ENCODE measurements at regions of chr14 and their contacts with region 1.

Region 1: GRCh38 chr14:20413045-20413799 is at the start of gene TEP1:
- DNase-seq: peak; percentile 33 to 84 (median 74)
- ATAC-seq: peak; percentile 63
- H3K4me3 ChIP-seq: peak within 1 kb of the TSS; percentile 66 to 97
- H3K4me3 Mint-ChIP-seq: peak within 1 kb of the TSS; percentile 91
- H3K27ac ChIP-seq: peak within 1 kb of the TSS; percentile 80 to 85
- H3K27ac Mint-ChIP-seq: peak within 1 kb of the TSS; percentile 93
- H3K4me1 ChIP-seq: peaks cover 31% of the 10 kb centered on the region
- H3K4me1 Mint-ChIP-seq: peaks cover 48% of the 10 kb centered on the region
- H3K27me3 ChIP-seq: no peaks in the 10 kb centered on the region
- H3K27me3 Mint-ChIP-seq: no peaks in the 10 kb centered on the region
- CTCF ChIP-seq: no peak
- total RNA-seq, gene TEP1: 16.9 to 20.2 TPM

Region 2: GRCh38 chr14:20343092-20343861 is 69.9 kb before region 1 on chr14 and contains the start of gene PARP2:
- CTCF ChIA-PET with region 1: interaction called, 7 read pairs
- POLR2A ChIA-PET with region 1: interaction called, 10 read pairs
- intact Hi-C with region 1: loop called (anchors 1 to 5 kb)
- DNase-seq: peak; percentile 70 to 97 (median 84)
- ATAC-seq: peak; percentile 81
- H3K4me3 ChIP-seq: peak within 1 kb of the TSS; percentile 96 to 98
- H3K4me3 Mint-ChIP-seq: peak within 1 kb of the TSS; percentile 100
- H3K27ac ChIP-seq: peak within 1 kb of the TSS; percentile 79 to 93
- H3K27ac Mint-ChIP-seq: peak within 1 kb of the TSS; percentile 97
- H3K4me1 ChIP-seq: peaks cover 8% of the 10 kb centered on the region
- H3K4me1 Mint-ChIP-seq: peaks cover 18% of the 10 kb centered on the region
- H3K27me3 ChIP-seq: peaks cover 0 to 3% of the 10 kb centered on the region in 2 experiments
- H3K27me3 Mint-ChIP-seq: no peaks in the 10 kb centered on the region
- CTCF ChIP-seq: peak; percentile 14
- total RNA-seq, gene PARP2: 15.9 to 16.5 TPM

Region 3: GRCh38 chr14:20440882-20441281 is 27.7 kb after region 1 on chr14:
- CTCF ChIA-PET with region 1: interaction called, 10 read pairs
- POLR2A ChIA-PET with region 1: interaction called, 3 read pairs
- intact Hi-C with region 1: loop called in 1 of 2 experiments (anchors 2 kb)
- DNase-seq: peak in 8 of 9 experiments; percentile 10 to 65 (median 39)
- ATAC-seq: peak; percentile 99
- H3K4me3 ChIP-seq: peak overlapping the region in 1 of 2 experiments; percentile 54
- H3K4me3 Mint-ChIP-seq: peak overlapping the region; percentile 73
- H3K27ac ChIP-seq: peak overlapping the region; percentile 51 to 54
- H3K27ac Mint-ChIP-seq: peak overlapping the region; percentile 90
- H3K4me1 ChIP-seq: peaks cover 23% of the 10 kb centered on the region
- H3K4me1 Mint-ChIP-seq: peaks cover 25% of the 10 kb centered on the region
- H3K27me3 ChIP-seq: no peaks in the 10 kb centered on the region
- H3K27me3 Mint-ChIP-seq: no peaks in the 10 kb centered on the region
- CTCF ChIP-seq: no peak

Region 4: DNA sequence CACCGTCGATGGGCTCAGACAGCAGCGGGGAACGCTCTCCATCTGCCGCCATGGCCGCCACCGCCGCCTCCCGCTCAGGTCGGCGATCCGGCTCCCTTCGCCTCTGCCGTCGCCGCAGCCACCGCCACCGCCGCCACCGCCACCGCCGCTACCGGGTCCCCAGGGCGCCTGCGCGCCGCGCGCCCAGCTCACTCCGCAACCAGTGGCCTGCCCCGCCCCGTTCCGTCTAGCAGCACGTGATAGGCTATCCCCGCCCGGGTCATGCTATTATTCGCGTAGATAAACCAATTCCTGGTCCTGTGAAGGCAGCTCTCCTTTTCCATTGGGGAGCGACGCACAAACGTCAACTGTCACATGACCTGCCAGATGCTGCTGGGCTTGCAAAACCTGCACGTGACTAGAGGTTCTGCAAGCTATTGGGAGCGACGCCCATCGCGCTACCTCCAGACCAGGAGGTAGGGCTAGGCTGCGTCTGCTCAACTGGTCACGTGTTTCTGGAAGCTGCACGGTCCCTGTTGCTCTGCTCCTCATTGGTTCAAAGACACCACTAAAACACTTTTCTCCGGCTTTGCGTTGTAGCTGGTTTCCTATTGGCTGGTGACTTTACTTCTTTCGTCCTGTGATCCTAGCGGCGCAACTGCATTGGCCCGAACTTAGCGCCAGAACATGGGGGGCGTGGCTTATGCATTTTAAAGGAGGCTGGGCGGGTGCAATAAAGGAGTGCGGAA is 48.2 kb after region 1 on chr14 and contains the start of gene PIP4P1:
- CTCF ChIA-PET with region 1: interaction called, 23 read pairs
- POLR2A ChIA-PET with region 1: interaction called, 12 read pairs
- intact Hi-C with region 1: loop called in 1 of 2 experiments (anchors 1 kb)
- DNase-seq: peak; percentile 95 to 100 (median 97)
- ATAC-seq: peak; percentile 85
- H3K4me3 ChIP-seq: peak within 1 kb of the TSS; percentile 72 to 85
- H3K4me3 Mint-ChIP-seq: peak within 1 kb of the TSS; percentile 92
- H3K27ac ChIP-seq: peak within 1 kb of the TSS; percentile 84 to 95
- H3K27ac Mint-ChIP-seq: peak within 1 kb of the TSS; percentile 96
- H3K4me1 ChIP-seq: peaks cover 26% of the 10 kb centered on the region
- H3K4me1 Mint-ChIP-seq: peaks cover 30% of the 10 kb centered on the region
- H3K27me3 ChIP-seq: no peaks in the 10 kb centered on the region
- H3K27me3 Mint-ChIP-seq: no peaks in the 10 kb centered on the region
- CTCF ChIP-seq: no peak
- total RNA-seq, gene PIP4P1: 87.7 to 105 TPM

Region 5: GRCh38 chr14:20477211-20477876 is 64.1 kb after region 1 on chr14:
- CTCF ChIA-PET with region 1: interaction called, 13 read pairs
- POLR2A ChIA-PET with region 1: interaction called, 4 read pairs
- intact Hi-C with region 1: no loop called
- DNase-seq: peak in 8 of 9 experiments; percentile 16 to 71 (median 44)
- ATAC-seq: peak; percentile 75
- H3K4me3 ChIP-seq: peak overlapping the region in 1 of 2 experiments; percentile 1
- H3K4me3 Mint-ChIP-seq: peak overlapping the region; percentile 65
- H3K27ac ChIP-seq: peak overlapping the region; percentile 41 to 79
- H3K27ac Mint-ChIP-seq: peak overlapping the region; percentile 92
- H3K4me1 ChIP-seq: peaks cover 66% of the 10 kb centered on the region
- H3K4me1 Mint-ChIP-seq: peaks cover 86% of the 10 kb centered on the region
- H3K27me3 ChIP-seq: no peaks in the 10 kb centered on the region
- H3K27me3 Mint-ChIP-seq: no peaks in the 10 kb centered on the region
- CTCF ChIP-seq: no peak

Region 6: GRCh38 chr14:20606190-20606901 is 193.1 kb after region 1 on chr14:
- CTCF ChIA-PET with region 1: interaction called, 42 read pairs
- POLR2A ChIA-PET with region 1: interaction called, 5 read pairs
- intact Hi-C with region 1: loop called (anchors 1 kb)
- DNase-seq: no peak
- ATAC-seq: no peak
- H3K4me3 ChIP-seq: no peak overlapping the region
- H3K4me3 Mint-ChIP-seq: no peak overlapping the region
- H3K27ac ChIP-seq: no peak overlapping the region
- H3K27ac Mint-ChIP-seq: no peak overlapping the region
- H3K4me1 ChIP-seq: peaks cover 8% of the 10 kb centered on the region
- H3K4me1 Mint-ChIP-seq: no peaks in the 10 kb centered on the region
- H3K27me3 ChIP-seq: no peaks in the 10 kb centered on the region
- H3K27me3 Mint-ChIP-seq: no peaks in the 10 kb centered on the region
- CTCF ChIP-seq: no peak